ENCODE measurements at regions of chr12 and their contacts with region 1.

Region 1: GRCh38 chr12:95343461-95344230 is 126.0 kb downstream of the VEZT start:
- DNase-seq: no peak
- H3K4me3 ChIP-seq: no peak overlapping the region
- H3K27ac ChIP-seq: no peak overlapping the region
- H3K4me1 ChIP-seq: no peaks in the 10 kb centered on the region
- H3K27me3 ChIP-seq: no peaks in the 10 kb centered on the region
- CTCF ChIP-seq: no peak

Region 2: GRCh38 chr12:95532851-95533250 is 189.2 kb after region 1 on chr12:
- intact Hi-C with region 1: loop called (anchors 10 kb)
- DNase-seq: no peak
- H3K4me3 ChIP-seq: no peak overlapping the region
- H3K27ac ChIP-seq: no peak overlapping the region
- H3K4me1 ChIP-seq: no peaks in the 10 kb centered on the region
- H3K27me3 ChIP-seq: no peaks in the 10 kb centered on the region
- CTCF ChIP-seq: no peak

Region 3: DNA sequence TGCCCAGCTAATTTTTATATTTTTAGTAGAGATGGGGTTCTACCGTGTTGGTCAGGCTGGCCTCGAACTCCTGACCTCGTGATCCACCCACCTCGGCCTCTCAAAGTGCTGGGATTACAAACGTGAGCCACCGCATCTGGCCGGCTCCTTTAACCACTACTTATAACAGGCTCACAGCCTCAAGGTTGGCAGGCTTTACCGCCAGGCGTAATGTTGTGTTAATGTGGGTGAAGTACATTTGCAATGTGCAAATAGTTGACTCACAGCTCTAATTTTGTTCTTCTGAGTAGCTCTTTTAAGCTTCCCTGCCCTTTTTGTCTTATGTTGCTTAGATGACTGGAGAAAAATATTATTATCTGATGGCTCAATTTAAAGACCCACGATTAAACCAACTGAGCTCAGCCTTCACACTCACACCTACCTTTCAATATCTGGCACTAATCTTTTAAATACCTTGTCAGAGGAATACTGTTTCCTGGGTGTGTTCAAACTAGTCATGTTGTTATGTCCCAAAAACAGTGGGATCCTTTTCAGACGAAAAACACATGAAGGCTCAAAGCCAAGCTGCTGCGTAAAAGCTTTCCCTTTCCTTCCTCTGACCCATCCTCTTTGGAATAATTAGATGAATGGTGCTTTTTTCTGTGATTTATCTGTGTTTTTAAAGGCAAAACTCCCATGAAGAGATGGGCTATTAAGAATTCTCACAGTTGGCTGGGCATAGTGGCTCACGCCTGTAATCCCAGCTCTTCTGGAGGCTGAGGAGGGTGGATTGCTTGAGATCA is 264.8 kb after region 1 on chr12:
- intact Hi-C with region 1: no loop called
- DNase-seq: peak; percentile 25
- H3K4me3 ChIP-seq: no peak overlapping the region
- H3K27ac ChIP-seq: no peak overlapping the region
- H3K4me1 ChIP-seq: no peaks in the 10 kb centered on the region
- H3K27me3 ChIP-seq: no peaks in the 10 kb centered on the region
- CTCF ChIP-seq: no peak